ENCODE measurements at regions of chr14 and their contacts with region 1.

Region 1: DNA sequence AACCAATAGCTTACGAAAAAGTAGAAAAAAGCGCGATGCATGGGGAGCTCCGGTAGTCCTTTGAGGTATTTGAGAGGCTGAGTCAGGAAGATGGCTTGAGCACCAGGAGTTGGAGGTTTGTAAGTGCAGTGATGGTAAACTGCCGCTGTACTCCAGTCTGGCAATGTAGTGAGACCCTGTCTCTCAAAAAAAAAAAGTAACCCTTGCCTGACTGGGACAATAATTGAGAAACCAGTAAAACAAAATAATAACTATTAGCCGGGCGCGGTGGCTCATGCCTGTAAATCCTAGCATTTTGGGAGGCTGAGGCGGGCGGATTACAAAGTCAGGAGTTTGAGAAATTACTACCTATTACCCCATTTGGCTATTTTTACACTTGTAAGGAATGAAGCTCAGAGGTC is 632 bp upstream of the ACOT2 start:
- DNase-seq: no peak
- H3K4me3 Mint-ChIP-seq: peak overlapping the region; percentile 85
- H3K27ac Mint-ChIP-seq: peak overlapping the region; percentile 91
- H3K4me1 Mint-ChIP-seq: peaks cover 41% of the 10 kb centered on the region
- H3K27me3 Mint-ChIP-seq: no peaks in the 10 kb centered on the region

Region 2: GRCh38 chr14:73491256-73492042 is 76.9 kb before region 1 on chr14:
- CTCF ChIA-PET with region 1: interaction called, 7 read pairs
- POLR2A ChIA-PET with region 1: interaction called, 44 read pairs
- DNase-seq: peak; percentile 79
- H3K4me3 Mint-ChIP-seq: peak overlapping the region; percentile 81
- H3K27ac Mint-ChIP-seq: peak overlapping the region; percentile 74
- H3K4me1 Mint-ChIP-seq: peaks cover 45% of the 10 kb centered on the region
- H3K27me3 Mint-ChIP-seq: peaks cover 12% of the 10 kb centered on the region

Region 3: GRCh38 chr14:73503648-73504047 is 64.7 kb before region 1 on chr14:
- CTCF ChIA-PET with region 1: interaction called, 52 read pairs
- POLR2A ChIA-PET with region 1: interaction called, 27 read pairs
- DNase-seq: no peak
- H3K4me3 Mint-ChIP-seq: no peak overlapping the region
- H3K27ac Mint-ChIP-seq: no peak overlapping the region
- H3K4me1 Mint-ChIP-seq: peaks cover 4% of the 10 kb centered on the region
- H3K27me3 Mint-ChIP-seq: no peaks in the 10 kb centered on the region

Region 4: GRCh38 chr14:73591690-73592448 is 23.5 kb after region 1 on chr14 and contains the start of gene ACOT4:
- CTCF ChIA-PET with region 1: interaction called, 22 read pairs
- POLR2A ChIA-PET with region 1: interaction called, 13 read pairs
- DNase-seq: peak; percentile 54
- H3K4me3 Mint-ChIP-seq: peak within 1 kb of the TSS; percentile 62
- H3K27ac Mint-ChIP-seq: peak within 1 kb of the TSS; percentile 53
- H3K4me1 Mint-ChIP-seq: peaks cover 8% of the 10 kb centered on the region
- H3K27me3 Mint-ChIP-seq: peaks cover 2% of the 10 kb centered on the region
- total RNA-seq, gene ACOT4: 0.83 to 0.93 TPM

Region 5: GRCh38 chr14:73613046-73613383 is 44.6 kb after region 1 on chr14:
- CTCF ChIA-PET with region 1: interaction called, 12 read pairs
- POLR2A ChIA-PET with region 1: interaction called, 16 read pairs
- DNase-seq: no peak
- H3K4me3 Mint-ChIP-seq: peak overlapping the region; percentile 77
- H3K27ac Mint-ChIP-seq: no peak overlapping the region
- H3K4me1 Mint-ChIP-seq: peaks cover 8% of the 10 kb centered on the region
- H3K27me3 Mint-ChIP-seq: peaks cover 25% of the 10 kb centered on the region

Region 6: GRCh38 chr14:73851644-73852382 is 283.4 kb after region 1 on chr14 and contains the start of gene PTGR2:
- CTCF ChIA-PET with region 1: no interaction called
- POLR2A ChIA-PET with region 1: interaction called, 14 read pairs
- DNase-seq: peak; percentile 88
- H3K4me3 Mint-ChIP-seq: peak within 1 kb of the TSS; percentile 98
- H3K27ac Mint-ChIP-seq: peak within 1 kb of the TSS; percentile 95
- H3K4me1 Mint-ChIP-seq: peaks cover 22% of the 10 kb centered on the region
- H3K27me3 Mint-ChIP-seq: peaks cover 5% of the 10 kb centered on the region
- total RNA-seq, gene PTGR2: 2.3 to 2.8 TPM

Measured in activated CD4-positive, alpha-beta memory T cell treated with anti-CD3 and anti-CD28 coated beads, Interleukin-2, amount 10 ng/mL, durations not matched to agents 7 days and 5 days (primary cell).